PC-9 (cell line): ENCODE measurements at regions of chr16 and their contacts with region 1.

Region 1: GRCh38 chr16:85821441-85822135 is 22.1 kb downstream of the COX4I1 start:
- DNase-seq: peak; percentile 54 to 72
- H3K4me3 ChIP-seq: no peak overlapping the region
- H3K27ac ChIP-seq: no peak overlapping the region
- H3K4me1 ChIP-seq: no peaks in the 10 kb centered on the region
- H3K27me3 ChIP-seq: peaks cover 77% of the 10 kb centered on the region
- CTCF ChIP-seq: peak; percentile 95

Region 2: GRCh38 chr16:85898521-85899442 is 77.2 kb after region 1 on chr16 and contains the start of gene IRF8:
- CTCF ChIA-PET with region 1: no interaction called
- POLR2A ChIA-PET with region 1: no interaction called
- intact Hi-C with region 1: loop called (anchors 1 kb)
- DNase-seq: no peak
- H3K4me3 ChIP-seq: no peak within 1 kb of the TSS
- H3K27ac ChIP-seq: no peak within 1 kb of the TSS
- H3K4me1 ChIP-seq: no peaks in the 10 kb centered on the region
- H3K27me3 ChIP-seq: peaks cover 92% of the 10 kb centered on the region
- CTCF ChIP-seq: no peak
- total RNA-seq, gene IRF8: not detected in 2 replicates

Region 3: GRCh38 chr16:85986931-85987749 is 165.6 kb after region 1 on chr16:
- CTCF ChIA-PET with region 1: no interaction called
- POLR2A ChIA-PET with region 1: no interaction called
- intact Hi-C with region 1: loop called (anchors 1 kb)
- DNase-seq: no peak
- H3K4me3 ChIP-seq: no peak overlapping the region
- H3K27ac ChIP-seq: no peak overlapping the region
- H3K4me1 ChIP-seq: no peaks in the 10 kb centered on the region
- H3K27me3 ChIP-seq: peaks cover 98% of the 10 kb centered on the region
- CTCF ChIP-seq: peak; percentile 58

Region 4: GRCh38 chr16:86016201-86016871 is 194.7 kb after region 1 on chr16:
- CTCF ChIA-PET with region 1: interaction called, 4 read pairs
- POLR2A ChIA-PET with region 1: no interaction called
- intact Hi-C with region 1: loop called (anchors 1 kb)
- DNase-seq: peak in 1 of 2 experiments; percentile 13
- H3K4me3 ChIP-seq: no peak overlapping the region
- H3K27ac ChIP-seq: no peak overlapping the region
- H3K4me1 ChIP-seq: no peaks in the 10 kb centered on the region
- H3K27me3 ChIP-seq: peaks cover 44% of the 10 kb centered on the region
- CTCF ChIP-seq: peak; percentile 84

Region 5: GRCh38 chr16:86519649-86520316 is 698.2 kb after region 1 on chr16:
- CTCF ChIA-PET with region 1: interaction called, 5 read pairs
- POLR2A ChIA-PET with region 1: no interaction called
- intact Hi-C with region 1: loop called (anchors 1 kb)
- DNase-seq: peak in 1 of 2 experiments; percentile 41
- H3K4me3 ChIP-seq: peak overlapping the region; percentile 30; the same call in 1 of the 2 replicates
- H3K27ac ChIP-seq: no peak overlapping the region
- H3K4me1 ChIP-seq: no peaks in the 10 kb centered on the region
- H3K27me3 ChIP-seq: peaks cover 78% of the 10 kb centered on the region
- CTCF ChIP-seq: peak; percentile 88